Activated CD4-positive, alpha-beta T cell treated with anti-CD3 and anti-CD28 coated beads, Interleukin-2, amount 10 ng/mL, durations not matched to agents 24 days and 14 days (primary cell): ENCODE measurements at regions of chr16 and their contacts with region 1.

Region 1: GRCh38 chr16:2531767-2532493 is 722 bp upstream of the CEMP1 start:
- DNase-seq: peak; percentile 99
- H3K4me3 Mint-ChIP-seq: peak overlapping the region; percentile 96
- H3K27ac Mint-ChIP-seq: peak overlapping the region; percentile 98
- H3K4me1 Mint-ChIP-seq: peaks cover 18% of the 10 kb centered on the region
- H3K27me3 Mint-ChIP-seq: no peaks in the 10 kb centered on the region

Region 2: DNA sequence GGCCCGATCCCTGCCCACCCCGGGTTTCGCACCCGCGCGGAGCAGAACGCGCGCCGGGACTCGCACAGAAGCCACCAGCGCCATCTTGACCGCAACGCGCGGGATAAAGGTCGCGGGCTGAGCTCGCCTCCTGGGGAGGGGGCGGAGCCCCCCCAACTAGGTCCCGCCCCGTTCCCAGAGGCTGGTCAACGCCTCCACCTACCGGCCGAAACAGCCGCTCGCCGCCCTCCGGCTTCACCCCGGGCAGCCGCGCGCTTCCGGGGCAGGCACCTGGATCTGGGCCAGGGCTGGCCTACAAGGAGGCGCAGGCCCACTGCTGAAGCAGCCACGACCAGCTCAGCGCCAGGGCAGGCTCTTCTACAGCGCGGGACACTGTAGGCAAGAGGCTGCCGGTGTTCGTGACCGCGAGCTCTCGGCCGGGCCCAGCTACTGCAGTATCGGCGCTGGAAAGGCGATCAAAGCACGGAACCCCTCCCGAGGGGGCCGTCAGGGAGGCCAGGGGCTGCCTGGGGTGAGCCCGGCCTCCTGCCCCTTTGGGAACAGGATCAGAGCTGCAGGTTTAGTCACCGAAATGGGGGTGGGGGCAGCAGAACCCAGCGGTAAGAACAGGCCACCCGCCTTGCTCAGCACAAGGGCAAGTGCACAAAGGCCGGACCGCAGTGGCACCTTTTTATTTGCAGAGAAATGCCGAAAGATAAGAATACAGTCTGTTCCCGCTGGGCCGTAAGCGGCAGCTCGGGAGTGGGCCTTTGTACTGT is 280.3 kb before region 1 on chr16 and contains the start of gene ECI1:
- intact Hi-C with region 1: loop called (anchors 10 kb)
- DNase-seq: peak; percentile 95
- H3K4me3 Mint-ChIP-seq: peak within 1 kb of the TSS; percentile 93
- H3K27ac Mint-ChIP-seq: peak within 1 kb of the TSS; percentile 90
- H3K4me1 Mint-ChIP-seq: peaks cover 6% of the 10 kb centered on the region
- H3K27me3 Mint-ChIP-seq: no peaks in the 10 kb centered on the region
- total RNA-seq, gene ECI1: 34.1 and 38.7 TPM in 2 replicates

Region 3: DNA sequence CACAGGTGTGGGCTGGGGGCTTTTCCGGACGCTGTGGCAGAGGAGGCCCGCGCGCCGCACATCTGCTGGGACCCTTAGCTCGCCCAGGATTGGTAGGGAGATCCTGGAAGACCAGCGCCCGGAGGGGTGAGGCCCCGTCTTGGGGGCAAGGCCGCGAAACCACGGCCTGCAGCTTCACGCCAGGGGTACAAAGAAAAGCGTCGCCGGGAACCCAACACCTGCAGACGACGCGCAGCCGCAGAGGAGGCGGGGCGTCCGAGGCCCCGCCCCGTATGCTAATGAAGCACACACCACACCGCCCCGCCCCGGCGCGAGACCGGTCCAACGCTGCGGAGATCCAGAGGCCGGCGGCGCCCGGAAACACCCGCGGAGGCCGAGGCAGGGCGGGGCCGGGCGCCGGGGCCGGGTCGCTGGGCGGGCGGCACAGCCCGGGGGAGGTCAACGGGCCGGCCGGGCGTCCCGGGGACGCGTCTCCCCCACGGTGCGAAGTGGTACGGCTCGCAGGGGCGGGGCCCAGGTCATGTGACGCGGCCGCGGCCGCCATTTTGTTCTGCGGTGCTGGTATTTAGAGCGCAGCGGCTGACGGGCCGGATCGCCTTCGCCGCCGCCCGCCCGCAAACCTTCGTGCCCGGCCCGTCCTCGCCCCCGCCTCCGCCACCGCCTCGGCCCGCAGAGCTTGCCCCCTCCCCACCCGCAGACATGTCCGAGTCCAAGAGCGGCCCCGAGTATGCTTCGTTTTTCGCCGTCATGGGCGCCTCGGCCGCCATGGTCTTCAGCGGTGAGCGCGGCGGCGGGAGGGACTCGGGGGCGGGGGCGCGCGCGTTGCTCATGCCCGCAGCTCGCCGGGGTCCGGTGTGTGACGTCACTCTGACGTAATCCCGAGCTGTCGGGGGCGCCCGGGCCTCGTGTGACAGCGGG is 18.3 kb before region 1 on chr16 and contains the start of gene ATP6V0C:
- intact Hi-C with region 1: loop called (anchors 1 kb)
- DNase-seq: peak; percentile 98
- H3K4me3 Mint-ChIP-seq: peak within 1 kb of the TSS; percentile 94
- H3K27ac Mint-ChIP-seq: peak within 1 kb of the TSS; percentile 97
- H3K4me1 Mint-ChIP-seq: peaks cover 38% of the 10 kb centered on the region
- H3K27me3 Mint-ChIP-seq: peaks cover 6% of the 10 kb centered on the region
- total RNA-seq, gene ATP6V0C: 105 and 122 TPM in 2 replicates

Region 4: GRCh38 chr16:2595393-2596205 is 63.7 kb after region 1 on chr16:
- intact Hi-C with region 1: loop called (anchors 10 kb)
- DNase-seq: no peak
- H3K4me3 Mint-ChIP-seq: no peak overlapping the region
- H3K27ac Mint-ChIP-seq: no peak overlapping the region
- H3K4me1 Mint-ChIP-seq: peaks cover 13% of the 10 kb centered on the region
- H3K27me3 Mint-ChIP-seq: no peaks in the 10 kb centered on the region

Region 5: GRCh38 chr16:2673066-2673999 is 141.4 kb after region 1 on chr16:
- intact Hi-C with region 1: loop called (anchors 5 kb)
- DNase-seq: peak; percentile 99
- H3K4me3 Mint-ChIP-seq: peak overlapping the region; percentile 85
- H3K27ac Mint-ChIP-seq: peak overlapping the region; percentile 80
- H3K4me1 Mint-ChIP-seq: peaks cover 24% of the 10 kb centered on the region
- H3K27me3 Mint-ChIP-seq: no peaks in the 10 kb centered on the region

Region 6: GRCh38 chr16:3012828-3013420 is 481.0 kb after region 1 on chr16 and contains the start of gene CLDN9:
- intact Hi-C with region 1: no loop called
- DNase-seq: no peak
- H3K4me3 Mint-ChIP-seq: no peak within 1 kb of the TSS
- H3K27ac Mint-ChIP-seq: no peak within 1 kb of the TSS
- H3K4me1 Mint-ChIP-seq: peaks cover 10% of the 10 kb centered on the region
- H3K27me3 Mint-ChIP-seq: peaks cover 27% of the 10 kb centered on the region
- total RNA-seq, gene CLDN9: not detected in 2 replicates